ENCODE measurements at regions of chr12 and their contacts with region 1.

Region 1: GRCh38 chr12:47715393-47715876 is 9.6 kb upstream of the RPAP3 start:
- DNase-seq: peak; percentile 61 to 86
- ATAC-seq: peak; percentile 22 to 66 (median 56)
- H3K4me3 ChIP-seq: peak overlapping the region in 1 of 10 donors; percentile 8
- H3K27ac ChIP-seq: peak overlapping the region in 9 of 10 donors; percentile 24 to 97 (median 93)
- H3K4me1 ChIP-seq: peaks cover 31 to 49% (median 47%) of the 10 kb centered on the region in 9 donors
- H3K27me3 ChIP-seq: no peaks in the 10 kb centered on the region
- CTCF ChIP-seq: peak; percentile 72 to 90 (median 83)

Region 2: DNA sequence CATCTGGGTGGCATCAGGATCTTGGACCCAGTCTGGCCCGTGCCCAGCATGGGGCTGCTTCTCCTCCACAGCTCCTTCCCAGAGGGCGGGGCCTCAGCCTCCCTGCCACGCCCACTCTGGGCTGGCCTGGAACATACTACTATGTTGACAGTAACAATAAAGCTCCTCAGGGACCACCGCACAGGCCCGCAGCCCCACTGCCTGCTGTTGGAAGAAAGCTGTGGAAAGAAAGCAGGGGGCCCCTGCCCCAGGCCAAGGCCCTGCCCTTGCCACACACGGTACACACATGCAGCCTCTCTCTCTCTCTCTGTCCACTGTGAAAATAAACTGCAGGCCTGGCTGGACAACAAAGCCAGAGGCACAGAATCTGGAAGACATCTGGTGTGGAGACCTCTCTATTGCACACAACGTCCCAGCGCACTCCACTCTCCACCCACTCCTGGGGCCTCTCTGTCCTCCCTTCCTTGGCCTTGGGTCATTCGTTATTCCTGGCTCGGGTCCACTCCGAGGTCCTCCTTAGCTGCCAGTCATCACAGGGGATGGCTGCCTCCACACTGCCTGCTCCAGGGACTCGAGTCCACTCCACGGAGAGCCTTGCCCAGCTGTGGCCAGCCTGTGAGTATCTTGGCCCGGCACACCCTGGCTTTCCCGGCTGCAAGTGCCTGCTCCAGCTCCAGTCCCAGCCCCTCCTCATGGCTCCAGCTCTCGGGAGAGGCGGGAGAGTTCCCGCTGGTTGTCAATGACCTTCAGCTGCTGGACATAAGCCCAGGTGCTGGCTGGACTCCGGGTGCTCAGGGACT is 21.6 kb after region 1 on chr12:
- intact Hi-C with region 1: loop called in 4 of 10 experiments (anchors 1 to 2 kb)
- DNase-seq: peak; percentile 90 to 91
- ATAC-seq: peak; percentile 77 to 89 (median 82)
- H3K4me3 ChIP-seq: peak overlapping the region in 5 of 10 donors; percentile 1 to 18 (median 8)
- H3K27ac ChIP-seq: peak overlapping the region; percentile 76 to 93 (median 86)
- H3K4me1 ChIP-seq: peaks cover 47 to 94% (median 84%) of the 10 kb centered on the region in 9 donors
- H3K27me3 ChIP-seq: no peaks in the 10 kb centered on the region
- CTCF ChIP-seq: no peak

Region 3: DNA sequence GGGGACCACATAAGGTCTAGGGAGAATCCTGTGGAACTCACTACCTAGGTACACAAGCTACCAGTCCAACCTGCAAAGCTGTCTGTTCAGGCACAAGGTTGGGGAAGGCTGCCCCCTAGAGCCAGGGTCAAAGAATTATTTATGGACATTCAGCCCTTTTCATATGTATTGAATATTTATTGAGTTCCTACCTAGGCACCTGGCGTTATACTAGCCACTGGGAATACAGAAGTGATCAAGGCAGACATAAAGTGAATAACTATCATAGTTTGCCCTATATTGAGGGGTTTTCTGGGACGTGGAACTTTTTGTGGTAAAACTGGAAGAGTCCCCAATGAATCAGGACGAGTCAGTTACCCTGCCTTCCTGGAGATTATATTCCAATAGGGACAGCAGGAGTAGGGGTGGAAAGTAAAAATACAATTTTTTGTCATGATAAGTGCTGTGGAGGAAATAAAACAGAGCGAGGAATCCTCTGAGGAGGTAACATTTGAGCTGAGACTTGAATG is 51.8 kb after region 1 on chr12:
- intact Hi-C with region 1: loop called in 8 of 10 experiments (anchors 2 to 5 kb)
- DNase-seq: peak; percentile 57 to 72
- ATAC-seq: peak in 7 of 8 donors; percentile 23 to 60 (median 39)
- H3K4me3 ChIP-seq: no peak overlapping the region
- H3K27ac ChIP-seq: no peak overlapping the region
- H3K4me1 ChIP-seq: peaks cover 0 to 59% (median 30%) of the 10 kb centered on the region in 9 donors
- H3K27me3 ChIP-seq: no peaks in the 10 kb centered on the region
- CTCF ChIP-seq: peak; percentile 37 to 78 (median 70)

Region 4: DNA sequence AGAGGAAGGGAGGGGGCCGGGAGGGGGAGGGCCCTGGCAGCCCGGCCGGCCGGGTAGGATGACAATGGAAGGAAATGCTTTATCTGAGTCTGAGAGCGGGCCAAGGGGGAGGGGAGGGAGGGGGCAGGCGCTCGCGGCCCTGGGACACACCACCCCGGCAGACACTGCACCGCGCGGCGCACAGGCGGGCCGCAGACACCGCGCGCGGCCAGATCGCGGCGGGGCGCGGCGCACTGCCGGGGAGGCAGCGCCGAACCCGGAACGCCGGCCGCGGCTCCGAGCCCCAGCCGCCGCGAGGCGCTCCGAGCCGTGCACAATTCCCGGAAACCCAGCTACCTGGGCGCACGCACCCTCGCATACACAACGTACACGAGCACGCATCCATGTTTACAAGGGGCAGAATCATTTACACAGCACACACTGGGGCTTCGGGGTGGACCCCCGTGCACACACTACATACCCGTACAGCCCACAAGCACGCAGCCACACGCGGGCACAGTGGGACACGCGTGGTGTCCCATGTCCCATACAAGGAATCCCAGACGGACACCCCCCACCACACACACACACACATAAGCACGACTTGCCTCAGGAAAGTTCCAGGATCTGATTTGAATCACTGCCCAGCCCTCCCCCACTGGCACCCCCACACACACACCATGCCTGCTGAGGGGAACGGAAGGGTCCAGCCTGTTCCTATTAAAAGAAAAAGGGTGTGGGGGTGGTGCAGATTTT is 104.6 kb after region 1 on chr12 and contains the start of gene HDAC7:
- intact Hi-C with region 1: loop called in 1 of 10 experiments (anchors 5 kb)
- DNase-seq: peak; percentile 92 to 93
- ATAC-seq: peak; percentile 51 to 81 (median 72)
- H3K4me3 ChIP-seq: peak within 1 kb of the TSS; percentile 61 to 91 (median 83)
- H3K27ac ChIP-seq: peak within 1 kb of the TSS; percentile 94 to 100 (median 99)
- H3K4me1 ChIP-seq: peaks cover 28 to 90% (median 84%) of the 10 kb centered on the region in 9 donors
- H3K27me3 ChIP-seq: no peaks in the 10 kb centered on the region
- CTCF ChIP-seq: peak in 1 of 9 donors; percentile 9
- total RNA-seq, gene HDAC7: 26.9 to 50.7 (median 38.5) TPM

Region 5: GRCh38 chr12:47837190-47838171 is 122.0 kb after region 1 on chr12:
- intact Hi-C with region 1: loop called (anchors 1 to 5 kb)
- DNase-seq: peak; percentile 68 to 75
- ATAC-seq: peak; percentile 58 to 89 (median 80)
- H3K4me3 ChIP-seq: no peak overlapping the region
- H3K27ac ChIP-seq: peak overlapping the region in 1 of 10 donors; percentile 17
- H3K4me1 ChIP-seq: peaks cover 3 to 26% (median 11%) of the 10 kb centered on the region in 9 donors
- H3K27me3 ChIP-seq: no peaks in the 10 kb centered on the region
- CTCF ChIP-seq: peak; percentile 86 to 97 (median 91)

Region 6: GRCh38 chr12:48903982-48904411 is 1188.6 kb after region 1 on chr12:
- intact Hi-C with region 1: no loop called
- DNase-seq: peak; percentile 75 to 86
- ATAC-seq: peak; percentile 85 to 96 (median 91)
- H3K4me3 ChIP-seq: peak overlapping the region; percentile 2 to 58 (median 49)
- H3K27ac ChIP-seq: no peak overlapping the region
- H3K4me1 ChIP-seq: peaks cover 0 to 15% (median 7%) of the 10 kb centered on the region in 9 donors
- H3K27me3 ChIP-seq: no peaks in the 10 kb centered on the region
- CTCF ChIP-seq: peak; percentile 43 to 82 (median 71)

Measured in heart right ventricle (tissue), 16 donors.